ENCODE measurements at regions of chr11 and their contacts with region 1.

Region 1: DNA sequence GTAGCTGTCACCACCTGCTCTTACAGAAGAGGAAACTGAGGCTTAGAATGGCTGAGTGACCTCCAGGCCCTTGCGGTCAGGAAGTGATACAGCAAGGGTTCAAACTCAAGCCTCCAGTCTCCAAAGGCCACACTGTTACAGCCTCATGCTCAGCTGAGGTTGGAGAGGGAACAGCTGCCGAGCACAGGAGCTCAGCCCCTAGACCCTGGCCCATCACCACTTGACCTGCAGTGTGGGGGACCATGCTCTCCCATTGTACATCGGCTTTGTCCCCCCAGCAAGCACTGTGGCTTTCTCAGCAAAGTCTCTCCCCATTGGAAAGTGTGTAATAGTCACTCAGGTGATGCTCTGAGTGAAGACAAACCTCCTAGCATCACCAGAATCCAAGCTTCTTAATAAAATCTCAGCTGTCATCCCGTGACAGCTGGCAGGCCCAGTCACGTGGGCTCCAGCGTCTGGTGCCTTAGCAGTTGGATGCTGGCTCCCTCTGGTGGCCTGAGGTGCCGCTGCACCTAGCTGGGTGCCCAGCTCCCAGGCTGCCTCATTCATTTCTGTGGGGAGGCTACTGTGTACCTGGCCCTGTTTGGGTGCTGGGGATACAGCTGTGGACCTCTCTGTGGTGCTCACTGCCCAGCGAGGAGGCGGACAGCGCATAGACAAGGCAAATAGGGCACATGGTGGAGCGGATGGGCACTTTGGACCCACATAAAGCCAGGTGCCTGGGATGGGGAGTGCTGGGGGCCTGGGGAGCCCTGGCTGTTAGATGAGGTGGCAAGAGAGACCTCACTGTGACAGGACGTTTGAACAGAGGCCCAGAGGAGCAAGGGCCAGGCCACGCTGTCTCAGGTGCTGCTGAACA is 19.1 kb upstream of the MYRF start:
- DNase-seq: peak; percentile 88
- H3K4me3 Mint-ChIP-seq: no peak overlapping the region
- H3K27ac Mint-ChIP-seq: no peak overlapping the region
- H3K4me1 Mint-ChIP-seq: no peaks in the 10 kb centered on the region
- H3K27me3 Mint-ChIP-seq: no peaks in the 10 kb centered on the region

Region 2: DNA sequence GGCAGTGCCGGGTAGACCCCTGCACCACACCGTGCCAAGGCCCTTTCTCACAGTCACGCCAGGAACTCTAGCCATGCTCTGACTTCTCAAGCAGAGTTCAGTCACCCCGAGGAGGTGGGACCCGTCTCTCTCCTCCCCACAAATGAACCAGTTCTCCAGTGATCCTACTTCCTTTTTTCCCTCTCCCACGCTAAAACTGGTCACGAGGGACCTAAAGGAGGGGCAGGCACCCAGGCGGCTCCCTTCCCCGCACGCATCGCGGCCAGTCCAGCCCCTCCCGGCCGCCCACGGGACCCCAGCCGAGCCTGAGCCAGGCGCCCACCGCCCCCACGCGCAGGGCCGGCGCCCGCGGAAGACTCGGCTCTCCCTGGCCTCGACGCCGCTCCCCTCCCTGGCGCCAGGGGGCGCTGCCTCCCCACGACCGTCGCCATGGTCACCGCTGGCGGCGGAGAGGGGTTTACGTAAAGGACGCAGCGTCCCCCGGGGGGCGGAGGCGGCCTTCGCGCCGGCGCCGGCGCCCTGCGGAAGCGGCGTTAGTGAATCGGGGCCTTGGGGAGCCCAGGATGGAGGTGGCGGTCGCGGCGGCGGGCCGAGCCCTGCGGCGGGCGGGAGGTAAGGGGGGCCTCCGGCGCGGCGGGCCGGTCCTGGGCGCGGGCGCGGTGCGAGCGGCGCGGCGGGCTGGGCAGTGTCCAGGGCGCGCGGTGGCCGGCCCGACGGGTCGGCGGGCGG is 53.3 kb before region 1 on chr11 and contains the start of gene DAGLA:
- CTCF ChIA-PET with region 1: interaction called, 14 read pairs
- POLR2A ChIA-PET with region 1: interaction called, 3 read pairs
- DNase-seq: peak; percentile 70
- H3K4me3 Mint-ChIP-seq: peak within 1 kb of the TSS; percentile 55
- H3K27ac Mint-ChIP-seq: no peak within 1 kb of the TSS
- H3K4me1 Mint-ChIP-seq: peaks cover 5% of the 10 kb centered on the region
- H3K27me3 Mint-ChIP-seq: peaks cover 37% of the 10 kb centered on the region
- total RNA-seq, gene DAGLA: 0.44 to 0.45 TPM

Region 3: GRCh38 chr11:61694730-61695706 is 38.3 kb before region 1 on chr11:
- CTCF ChIA-PET with region 1: interaction called, 10 read pairs
- POLR2A ChIA-PET with region 1: no interaction called
- DNase-seq: no peak
- H3K4me3 Mint-ChIP-seq: peak overlapping the region; percentile 55
- H3K27ac Mint-ChIP-seq: peak overlapping the region; percentile 84
- H3K4me1 Mint-ChIP-seq: peaks cover 30% of the 10 kb centered on the region
- H3K27me3 Mint-ChIP-seq: no peaks in the 10 kb centered on the region

Region 4: GRCh38 chr11:61711498-61711897 is 21.9 kb before region 1 on chr11:
- CTCF ChIA-PET with region 1: interaction called, 20 read pairs
- POLR2A ChIA-PET with region 1: no interaction called
- DNase-seq: no peak
- H3K4me3 Mint-ChIP-seq: no peak overlapping the region
- H3K27ac Mint-ChIP-seq: no peak overlapping the region
- H3K4me1 Mint-ChIP-seq: no peaks in the 10 kb centered on the region
- H3K27me3 Mint-ChIP-seq: no peaks in the 10 kb centered on the region

Region 5: DNA sequence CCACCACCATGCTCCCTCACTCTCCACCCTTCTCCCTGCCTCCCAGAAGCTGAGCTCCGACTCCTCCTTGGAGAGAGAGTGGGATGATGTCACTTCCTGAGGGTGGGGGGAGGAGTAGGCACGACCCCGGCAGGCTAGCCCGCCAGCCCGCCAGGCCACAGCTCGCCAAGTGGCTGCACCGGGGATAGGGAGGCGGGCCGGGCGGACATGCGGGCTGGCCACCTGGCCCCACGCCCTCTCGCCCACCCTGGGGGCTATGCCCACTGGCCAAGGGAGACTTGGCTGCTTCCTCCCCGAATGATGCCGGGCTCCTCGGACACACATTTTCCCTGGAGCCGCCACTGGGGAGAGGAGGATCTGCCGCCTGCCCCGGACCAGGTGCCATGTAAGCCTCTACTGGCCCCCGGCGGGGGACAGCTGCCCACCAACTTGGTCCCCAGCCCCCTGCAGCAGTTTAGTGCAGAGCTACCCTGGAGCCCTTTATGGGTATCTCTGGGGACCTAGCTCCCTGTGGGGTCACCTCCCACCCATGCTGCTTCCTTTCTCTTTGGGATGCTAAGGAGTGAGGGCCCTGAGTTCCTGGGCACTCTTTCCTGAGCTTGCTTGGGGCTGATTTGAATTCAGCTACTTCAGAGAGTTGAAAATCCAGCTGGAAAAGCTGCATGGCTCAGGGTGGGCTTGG is 14.6 kb before region 1 on chr11:
- CTCF ChIA-PET with region 1: interaction called, 20 read pairs
- POLR2A ChIA-PET with region 1: no interaction called
- DNase-seq: no peak
- H3K4me3 Mint-ChIP-seq: no peak overlapping the region
- H3K27ac Mint-ChIP-seq: no peak overlapping the region
- H3K4me1 Mint-ChIP-seq: no peaks in the 10 kb centered on the region
- H3K27me3 Mint-ChIP-seq: no peaks in the 10 kb centered on the region

Region 6: DNA sequence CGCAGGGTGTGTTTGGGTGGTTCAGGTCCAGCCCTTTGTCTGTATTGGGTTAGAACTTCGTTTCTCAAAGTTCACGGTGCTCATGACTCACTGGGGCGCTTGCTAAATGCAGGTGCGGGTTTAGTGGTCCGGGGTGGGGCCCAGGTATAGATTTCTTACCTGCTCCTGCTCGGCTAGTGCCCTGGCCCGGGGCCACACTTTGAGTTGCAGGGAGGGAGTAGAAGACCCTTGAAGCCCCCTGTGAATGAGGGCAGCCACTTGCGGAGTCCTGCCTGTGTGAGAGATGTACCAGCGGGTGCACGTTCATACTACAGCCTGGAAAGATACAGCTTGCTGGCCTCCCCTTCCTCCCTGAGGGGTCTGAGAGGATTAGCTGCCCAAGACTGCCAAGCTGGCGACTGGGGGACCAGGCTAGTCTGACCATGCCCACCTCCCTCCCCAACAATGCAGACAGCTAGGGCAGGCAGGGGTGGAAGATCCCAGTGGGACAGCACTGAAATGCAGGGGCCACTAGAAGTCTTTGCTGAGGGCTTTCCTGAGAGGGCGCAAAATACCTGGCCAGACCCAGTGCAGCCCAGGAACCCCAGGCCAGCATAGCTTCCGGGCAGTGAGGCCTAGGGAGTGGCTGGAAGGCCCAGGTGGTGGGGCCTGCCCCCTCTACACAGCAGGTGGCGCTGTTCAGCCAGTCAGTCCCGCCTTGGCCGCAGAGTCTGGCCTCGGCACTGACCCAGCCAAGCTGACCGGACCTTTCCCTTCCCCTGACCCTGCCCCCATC is 14.0 kb after region 1 on chr11:
- CTCF ChIA-PET with region 1: interaction called, 13 read pairs
- POLR2A ChIA-PET with region 1: no interaction called
- DNase-seq: peak; percentile 53
- H3K4me3 Mint-ChIP-seq: no peak overlapping the region
- H3K27ac Mint-ChIP-seq: no peak overlapping the region
- H3K4me1 Mint-ChIP-seq: peaks cover 4% of the 10 kb centered on the region
- H3K27me3 Mint-ChIP-seq: peaks cover 17% of the 10 kb centered on the region

Region 7: GRCh38 chr11:61764606-61765260 is 31.4 kb after region 1 on chr11:
- CTCF ChIA-PET with region 1: no interaction called
- POLR2A ChIA-PET with region 1: no interaction called
- DNase-seq: no peak
- H3K4me3 Mint-ChIP-seq: no peak overlapping the region
- H3K27ac Mint-ChIP-seq: no peak overlapping the region
- H3K4me1 Mint-ChIP-seq: no peaks in the 10 kb centered on the region
- H3K27me3 Mint-ChIP-seq: no peaks in the 10 kb centered on the region

Measured in activated CD4-positive, alpha-beta T cell treated with anti-CD3 and anti-CD28 coated beads, Interleukin-2, amount 10 ng/mL, durations not matched to agents 7 days and 5 days (primary cell).